Cardiac septum (tissue), 1 donor: ENCODE measurements at regions of chr3 and their contacts with region 1.

Region 1: GRCh38 chr3:129052675-129053074 is 7.9 kb upstream of the GP9 start:
- DNase-seq: peak; percentile 74

Region 2: GRCh38 chr3:128969993-128970739 is 82.5 kb before region 1 on chr3:
- intact Hi-C with region 1: loop called (anchors 2 kb)
- DNase-seq: no peak

Region 3: GRCh38 chr3:129026728-129027543 is 25.7 kb before region 1 on chr3:
- intact Hi-C with region 1: loop called (anchors 2 kb)
- DNase-seq: peak; percentile 96

Region 4: GRCh38 chr3:129087138-129087702 is 34.5 kb after region 1 on chr3:
- intact Hi-C with region 1: loop called (anchors 5 kb)
- DNase-seq: no peak

Region 5: DNA sequence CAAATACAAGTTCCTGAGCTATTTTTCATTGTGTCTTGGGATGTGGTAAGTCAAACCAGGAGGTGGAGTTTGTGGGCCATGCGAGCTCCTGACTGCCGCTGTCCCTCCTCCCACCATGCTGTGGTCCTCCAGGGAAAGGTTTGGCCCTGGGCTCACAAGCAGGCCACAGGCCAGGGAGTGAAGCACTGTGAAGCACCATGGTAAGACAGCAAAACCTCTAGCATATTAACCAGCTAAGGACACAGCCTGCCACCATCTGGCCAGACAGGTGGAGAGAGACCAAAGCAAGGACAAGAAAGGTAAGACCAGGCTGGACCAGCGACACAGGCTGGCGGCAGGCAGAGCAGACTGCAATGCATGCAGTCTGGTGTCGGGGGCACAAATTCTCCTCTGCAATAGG is 53.7 kb after region 1 on chr3:
- intact Hi-C with region 1: loop called (anchors 5 kb)
- DNase-seq: no peak